ENCODE measurements at regions of chr7 and their contacts with region 1.

Region 1: DNA sequence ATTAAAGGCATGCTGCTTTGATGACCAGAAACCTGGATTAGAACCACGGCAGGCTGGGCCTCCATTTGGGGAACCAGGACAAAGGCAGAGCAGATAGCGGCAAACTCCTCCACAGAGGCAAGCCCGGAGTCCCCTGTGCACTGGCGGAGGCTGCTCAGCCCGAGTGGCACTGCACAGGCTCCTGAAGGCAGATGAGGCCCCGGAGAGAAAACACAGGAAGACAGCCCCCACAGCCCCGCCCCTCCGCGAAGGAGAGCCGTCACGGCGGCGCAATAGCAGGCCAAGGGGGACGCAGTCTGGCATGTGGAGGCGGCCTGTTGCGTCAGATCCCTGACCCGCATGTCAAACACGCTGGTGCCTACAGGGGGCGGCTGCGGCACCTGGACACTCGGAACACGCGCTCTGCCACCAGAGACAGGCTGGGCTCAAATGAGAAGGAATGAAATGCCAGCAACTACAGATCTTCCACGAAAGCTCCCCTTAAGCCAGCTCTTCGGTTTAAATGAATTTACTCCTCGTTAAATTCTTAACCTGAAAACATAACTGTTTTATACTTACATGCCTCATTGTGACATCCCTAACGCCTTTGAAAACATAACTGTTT is 128.5 kb downstream of the MAD1L1 start:
- DNase-seq: peak; percentile 56
- H3K4me3 ChIP-seq: no peak overlapping the region
- H3K27ac ChIP-seq: no peak overlapping the region
- H3K4me1 ChIP-seq: no peaks in the 10 kb centered on the region
- H3K27me3 ChIP-seq: no peaks in the 10 kb centered on the region
- CTCF ChIP-seq: peak in 3 of 4 experiments; percentile 41 to 75 (median 63)
- POLR2A ChIP-seq: no peak

Region 2: GRCh38 chr7:1579481-1580421 is 524.5 kb before region 1 on chr7:
- intact Hi-C with region 1: loop called (anchors 10 kb)
- DNase-seq: peak; percentile 43
- H3K4me3 ChIP-seq: no peak overlapping the region
- H3K27ac ChIP-seq: no peak overlapping the region
- H3K4me1 ChIP-seq: no peaks in the 10 kb centered on the region
- H3K27me3 ChIP-seq: no peaks in the 10 kb centered on the region
- CTCF ChIP-seq: peak; percentile 39 to 79 (median 70)
- POLR2A ChIP-seq: no peak

Region 3: DNA sequence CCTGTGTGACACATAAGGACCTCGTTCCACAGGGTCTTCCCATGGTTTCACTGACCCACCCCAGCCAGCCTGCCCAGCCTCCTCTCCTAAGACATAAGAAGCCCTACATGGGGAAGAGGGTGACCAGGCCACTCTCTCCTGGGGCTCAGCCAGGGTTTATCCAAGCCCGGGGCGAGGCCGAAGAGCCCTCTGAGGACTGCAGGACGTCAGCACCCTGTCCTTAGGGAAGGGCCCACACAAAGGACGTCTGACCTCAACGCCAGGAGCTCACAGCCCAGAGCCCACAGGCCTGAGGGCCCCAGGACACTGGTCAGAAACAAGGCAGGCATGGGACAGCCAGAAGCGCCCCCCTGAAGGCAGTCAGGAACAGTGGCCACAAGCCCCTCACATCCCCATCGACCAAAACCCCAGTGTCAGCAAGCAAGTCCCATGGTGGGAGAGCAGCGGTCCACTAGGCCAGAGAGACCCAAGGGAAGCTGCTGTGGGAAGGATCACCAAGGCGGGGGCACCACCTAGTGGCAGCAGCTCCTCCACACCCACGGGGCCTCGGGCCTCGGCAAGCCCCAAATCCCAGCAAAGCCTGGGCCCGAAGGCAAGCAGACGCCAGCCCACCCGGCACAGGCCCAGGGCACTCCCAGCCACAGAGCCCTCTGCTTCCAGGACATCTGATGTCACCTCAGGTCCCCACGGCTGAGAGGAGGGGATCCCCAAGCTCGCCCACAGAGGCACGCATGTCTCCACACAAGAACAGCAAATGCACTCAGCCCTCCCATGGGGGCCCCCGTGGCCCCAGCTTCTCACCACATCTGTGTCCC is 105.1 kb after region 1 on chr7:
- intact Hi-C with region 1: loop called (anchors 2 kb)
- DNase-seq: peak; percentile 61
- H3K4me3 ChIP-seq: no peak overlapping the region
- H3K27ac ChIP-seq: no peak overlapping the region
- H3K4me1 ChIP-seq: no peaks in the 10 kb centered on the region
- H3K27me3 ChIP-seq: no peaks in the 10 kb centered on the region
- CTCF ChIP-seq: peak; percentile 44 to 85 (median 68)
- POLR2A ChIP-seq: no peak